ENCODE measurements at regions of chr10 and their contacts with region 1.

Region 1: GRCh38 chr10:103592186-103593021 is 98.9 kb downstream of the NEURL1 start:
- DNase-seq: peak; percentile 56 to 94
- ATAC-seq: peak; percentile 80 to 94
- H3K4me3 ChIP-seq: no peak overlapping the region
- H3K27ac ChIP-seq: no peak overlapping the region
- H3K4me1 ChIP-seq: no peaks in the 10 kb centered on the region
- CTCF ChIP-seq: peak; percentile 77
- EP300 ChIP-seq: no peak
- POLR2A ChIP-seq: no peak
- RAD21 ChIP-seq: peak; percentile 76 to 86

Region 2: DNA sequence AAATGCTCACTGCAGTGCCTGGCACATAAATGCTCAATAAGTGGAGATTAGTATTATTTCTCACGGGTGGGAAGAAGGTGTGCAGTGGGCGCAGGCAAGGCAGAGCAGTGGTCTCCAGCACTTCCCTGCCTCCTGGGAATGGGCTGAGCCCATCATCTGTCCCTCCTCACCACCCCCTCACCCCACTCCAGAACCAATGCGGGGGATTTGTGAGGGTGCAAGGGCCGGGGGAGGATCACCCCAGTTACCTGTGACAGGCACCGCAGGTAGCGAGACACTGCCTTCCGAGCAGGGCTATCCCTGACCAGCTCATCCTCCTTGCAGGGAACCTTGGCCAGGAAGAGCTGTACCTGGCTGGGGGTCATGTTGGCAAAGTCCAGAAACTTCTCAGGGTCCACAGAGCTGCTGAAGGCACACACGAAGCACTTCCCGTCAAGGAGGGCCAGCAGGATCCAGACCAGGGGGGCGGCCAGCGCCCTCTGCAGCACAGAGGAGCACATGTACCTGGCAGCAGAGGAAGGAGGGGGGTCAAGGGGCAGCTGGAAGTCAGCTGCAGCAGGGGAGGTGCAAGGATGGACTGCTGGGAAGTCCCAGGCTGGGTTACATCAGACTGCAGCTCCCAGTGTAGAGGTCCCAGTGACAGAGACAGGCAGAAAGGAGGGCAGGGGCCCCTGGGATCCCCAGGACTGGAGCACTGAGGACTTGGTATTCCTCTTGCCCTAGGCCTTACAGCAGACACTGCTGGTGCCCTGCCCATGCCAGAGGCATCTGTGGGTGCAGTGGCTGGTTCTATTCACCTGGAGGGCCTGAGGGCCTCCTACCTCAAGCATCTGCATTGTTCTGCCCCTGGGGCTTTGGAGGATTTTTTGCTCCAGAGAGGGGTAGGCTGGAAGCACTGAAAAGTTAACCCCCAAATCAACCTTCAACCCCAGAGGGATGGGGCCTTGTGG is 116.1 kb before region 1 on chr10:
- CTCF ChIA-PET with region 1: no interaction called
- POLR2A ChIA-PET with region 1: no interaction called
- DNase-seq: peak in 1 of 2 experiments; percentile 39
- ATAC-seq: peak; percentile 58 to 77
- H3K4me3 ChIP-seq: no peak overlapping the region
- H3K27ac ChIP-seq: no peak overlapping the region
- H3K4me1 ChIP-seq: peaks cover 26% of the 10 kb centered on the region
- CTCF ChIP-seq: no peak
- EP300 ChIP-seq: no peak
- POLR2A ChIP-seq: no peak
- RAD21 ChIP-seq: no peak

Region 3: DNA sequence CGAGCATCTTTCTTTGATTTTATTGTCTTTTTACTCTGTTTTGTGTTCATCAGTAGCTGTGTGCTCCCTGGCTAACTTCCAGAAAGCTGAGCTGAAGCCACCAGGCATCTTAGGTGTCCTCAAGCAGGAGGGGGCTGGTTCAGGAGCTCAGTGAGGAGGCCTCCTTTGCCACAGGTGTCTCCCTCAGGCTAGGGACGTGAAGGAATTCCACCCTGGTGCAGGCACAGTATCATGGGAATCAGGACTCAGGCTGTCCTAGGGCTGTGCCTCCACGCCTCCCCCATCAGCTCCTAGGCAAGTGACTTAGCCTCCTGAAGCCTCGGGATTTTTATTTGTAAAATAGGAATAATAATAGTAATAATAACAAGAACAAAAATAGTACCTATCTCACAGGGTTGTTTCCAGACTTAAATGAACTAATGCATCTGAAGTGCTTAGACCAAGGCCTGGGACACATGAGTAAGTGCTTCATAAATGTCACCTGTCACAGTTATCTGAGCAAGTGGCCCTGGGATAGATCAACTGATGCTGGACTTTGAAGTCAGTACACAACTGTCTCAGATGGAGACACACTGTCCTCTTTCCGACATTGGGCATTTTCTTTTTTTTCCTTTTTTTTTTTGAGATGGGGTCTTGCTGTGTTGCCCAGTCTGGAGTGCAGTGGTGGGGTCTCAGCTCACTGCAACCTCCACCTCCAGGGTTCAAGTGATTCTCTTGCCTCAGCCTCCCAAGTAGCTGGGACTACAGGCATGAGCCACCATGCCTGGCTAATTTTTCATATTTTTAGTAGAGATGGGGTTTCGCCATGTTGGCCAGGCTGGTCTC is 105.9 kb before region 1 on chr10:
- CTCF ChIA-PET with region 1: interaction called, 10 read pairs
- POLR2A ChIA-PET with region 1: interaction called, 3 read pairs
- DNase-seq: no peak
- ATAC-seq: no peak
- H3K4me3 ChIP-seq: no peak overlapping the region
- H3K27ac ChIP-seq: no peak overlapping the region
- H3K4me1 ChIP-seq: no peaks in the 10 kb centered on the region
- CTCF ChIP-seq: no peak
- EP300 ChIP-seq: no peak
- POLR2A ChIP-seq: no peak
- RAD21 ChIP-seq: no peak

Region 4: DNA sequence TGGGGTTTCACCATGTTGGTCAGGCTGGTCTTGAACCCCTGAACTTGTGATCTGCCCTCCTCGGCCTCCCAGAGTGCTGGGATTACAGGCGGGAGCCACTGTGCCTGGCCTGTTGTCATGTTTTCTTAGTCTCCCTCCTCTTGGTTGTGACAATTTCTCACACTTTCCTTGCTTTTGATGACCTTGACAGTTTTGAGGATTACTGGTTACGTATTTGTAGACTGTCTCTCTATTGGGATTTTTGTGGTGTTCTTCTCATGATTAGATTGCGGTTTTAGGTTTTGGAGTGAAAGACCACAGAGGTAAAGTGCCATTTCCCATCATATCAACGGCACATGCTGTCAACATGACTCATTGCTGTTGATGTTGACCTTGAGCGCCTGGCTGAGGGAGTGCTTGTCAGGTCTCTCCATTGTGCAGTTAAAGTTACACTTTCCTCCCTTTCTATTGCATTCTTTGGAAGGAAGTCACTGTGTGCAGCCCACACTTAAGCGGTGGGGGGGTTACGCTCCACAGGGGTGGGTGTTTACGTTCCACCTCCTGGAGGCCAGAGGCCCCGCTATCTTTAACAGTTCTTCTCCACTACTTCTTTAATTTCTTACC is 88.1 kb before region 1 on chr10:
- CTCF ChIA-PET with region 1: interaction called, 11 read pairs
- POLR2A ChIA-PET with region 1: no interaction called
- DNase-seq: peak; percentile 77 to 85
- ATAC-seq: peak; percentile 71 to 81; a peak in 5 of 6 replicates
- H3K4me3 ChIP-seq: no peak overlapping the region
- H3K27ac ChIP-seq: peak overlapping the region; percentile 45 to 60; a peak in 3 of 6 replicates
- H3K4me1 ChIP-seq: peaks cover 12% of the 10 kb centered on the region
- CTCF ChIP-seq: no peak
- EP300 ChIP-seq: no peak
- POLR2A ChIP-seq: no peak
- RAD21 ChIP-seq: no peak

Region 5: DNA sequence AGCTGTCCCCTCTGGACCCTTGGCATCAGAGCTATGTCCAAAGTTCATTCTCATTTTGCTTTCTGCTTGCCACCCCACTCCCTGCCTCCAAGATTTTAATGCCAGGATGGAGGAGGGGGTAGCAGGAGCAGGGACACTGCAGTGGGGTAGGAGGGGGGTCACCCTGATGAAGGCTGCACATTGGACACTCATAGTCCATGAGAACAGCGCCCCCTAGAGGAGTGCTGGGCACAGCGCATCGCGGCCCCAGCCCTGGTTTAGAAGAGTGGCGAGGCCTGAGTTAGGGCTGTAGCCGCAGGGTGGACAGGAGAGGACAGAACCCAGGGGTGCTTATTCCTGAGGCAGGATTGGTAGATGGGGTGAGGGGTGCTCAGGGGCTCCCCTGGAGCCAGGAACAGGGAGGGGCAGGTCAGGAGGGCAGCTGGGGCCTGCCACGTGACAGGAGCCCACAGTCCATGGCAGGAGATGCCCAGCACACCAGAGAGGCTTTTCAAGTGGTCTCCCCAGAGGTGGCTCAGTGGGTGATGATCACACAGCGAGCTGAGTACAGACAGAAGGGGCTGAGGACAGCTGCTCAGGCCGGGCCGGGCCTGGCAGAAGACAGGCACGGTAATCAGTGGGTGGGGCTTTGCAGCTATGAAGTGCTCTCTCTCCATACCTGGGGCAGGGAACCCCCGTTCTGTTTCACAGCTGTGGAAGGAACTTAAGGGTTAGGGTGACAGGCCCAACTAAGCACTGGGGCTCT is 27.5 kb before region 1 on chr10:
- CTCF ChIA-PET with region 1: interaction called, 28 read pairs
- POLR2A ChIA-PET with region 1: no interaction called
- DNase-seq: peak; percentile 43 to 67
- ATAC-seq: peak; percentile 62 to 88; a peak in 5 of 6 replicates
- H3K4me3 ChIP-seq: no peak overlapping the region
- H3K27ac ChIP-seq: no peak overlapping the region
- H3K4me1 ChIP-seq: no peaks in the 10 kb centered on the region
- CTCF ChIP-seq: peak; percentile 56
- EP300 ChIP-seq: no peak
- POLR2A ChIP-seq: no peak
- RAD21 ChIP-seq: peak; percentile 32 to 64; a peak in 2 of 5 replicates

Region 6: DNA sequence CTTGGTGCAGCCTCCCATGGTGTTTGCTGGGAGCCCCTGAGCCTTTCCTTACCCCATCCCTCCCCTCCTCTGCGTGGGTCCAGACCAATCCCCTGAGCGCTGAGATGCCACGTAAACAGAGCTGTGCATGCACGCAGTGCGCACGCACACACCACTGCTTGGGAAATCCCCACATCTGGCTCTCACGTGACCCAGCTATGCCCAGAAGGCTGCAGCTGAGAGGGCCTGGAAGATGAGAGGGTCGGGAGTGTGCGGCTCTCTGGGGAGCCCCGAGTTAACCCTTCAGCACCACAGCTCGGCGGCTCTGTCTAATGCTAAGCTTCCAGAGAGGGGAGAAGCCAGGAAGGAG is 85.7 kb after region 1 on chr10:
- CTCF ChIA-PET with region 1: interaction called, 265 read pairs
- POLR2A ChIA-PET with region 1: no interaction called
- DNase-seq: no peak
- ATAC-seq: no peak
- H3K4me3 ChIP-seq: no peak overlapping the region
- H3K27ac ChIP-seq: no peak overlapping the region; a peak in 1 of 6 replicates
- H3K4me1 ChIP-seq: peaks cover 21% of the 10 kb centered on the region
- CTCF ChIP-seq: no peak
- EP300 ChIP-seq: no peak
- POLR2A ChIP-seq: no peak
- RAD21 ChIP-seq: no peak

Region 7: DNA sequence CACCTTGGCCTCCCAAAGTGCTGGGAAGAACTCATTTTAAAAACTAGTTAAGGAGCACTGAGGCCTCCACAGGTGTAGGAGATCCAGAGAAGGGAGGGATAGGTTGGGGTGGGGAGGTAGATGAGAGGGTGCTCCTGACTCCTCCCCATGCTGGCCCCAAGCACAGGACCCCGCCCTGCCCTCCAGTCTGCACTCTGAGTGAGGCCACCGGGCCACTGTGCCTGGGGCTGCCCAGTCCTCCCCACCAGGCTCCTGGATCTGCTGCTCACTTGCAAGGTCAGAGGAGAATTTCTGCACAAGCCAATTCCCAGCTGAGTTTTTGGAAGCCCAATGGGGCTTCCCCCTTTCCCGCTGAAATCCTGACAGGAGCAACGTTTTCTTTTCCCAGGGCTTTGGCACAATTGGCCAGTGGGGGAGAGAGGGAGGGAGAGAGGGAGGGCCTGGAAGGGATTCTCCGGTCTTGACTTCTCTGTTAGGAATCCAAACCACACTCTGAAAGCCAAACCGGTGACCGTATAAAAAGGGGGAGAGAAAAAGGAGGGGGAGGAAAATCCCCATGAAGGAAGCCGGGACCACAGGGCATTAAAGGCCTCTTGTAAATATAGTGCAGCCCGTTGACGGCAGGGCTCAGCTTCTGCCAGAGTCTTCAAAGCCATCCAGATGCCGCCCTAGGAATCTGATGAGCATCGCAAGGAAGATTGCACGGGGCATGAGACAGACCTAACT is 146.8 kb after region 1 on chr10:
- CTCF ChIA-PET with region 1: no interaction called
- POLR2A ChIA-PET with region 1: no interaction called
- DNase-seq: no peak
- ATAC-seq: no peak
- H3K4me3 ChIP-seq: no peak overlapping the region
- H3K27ac ChIP-seq: peak overlapping the region in 1 of 2 experiments; percentile 27; a peak in 1 of 6 replicates
- H3K4me1 ChIP-seq: peaks cover 5% of the 10 kb centered on the region; the same call in 2 of the 3 replicates
- CTCF ChIP-seq: no peak
- EP300 ChIP-seq: no peak
- POLR2A ChIP-seq: no peak
- RAD21 ChIP-seq: no peak

Region 8: DNA sequence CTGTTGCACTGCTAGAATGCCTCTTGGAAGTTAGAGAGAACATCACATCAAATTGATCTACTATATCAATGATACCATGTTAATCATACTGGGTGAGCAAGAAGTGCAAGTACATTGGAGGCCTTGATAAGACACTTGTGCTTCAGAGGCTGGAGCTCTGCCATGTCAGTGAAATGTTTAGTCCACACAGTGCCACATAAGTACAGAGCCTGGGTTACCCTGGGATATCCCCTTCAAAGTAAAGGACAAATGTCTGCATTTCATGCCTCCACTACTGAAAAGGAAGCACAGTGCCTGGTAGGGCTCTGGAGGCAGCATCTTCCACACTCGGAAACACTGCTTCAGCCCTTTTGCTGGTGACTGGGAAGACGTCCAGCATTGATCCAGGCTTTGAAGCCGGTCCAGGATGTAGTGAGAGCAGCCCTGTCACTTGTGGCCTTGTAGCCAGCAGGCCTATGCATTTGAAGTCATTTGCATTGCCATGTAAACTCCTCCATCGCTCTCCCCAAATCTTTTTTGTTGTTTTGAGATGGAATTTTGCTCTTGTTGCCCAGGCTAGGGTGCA is 341.2 kb after region 1 on chr10:
- CTCF ChIA-PET with region 1: no interaction called
- POLR2A ChIA-PET with region 1: no interaction called
- DNase-seq: no peak
- ATAC-seq: no peak
- H3K4me3 ChIP-seq: no peak overlapping the region
- H3K27ac ChIP-seq: no peak overlapping the region
- H3K4me1 ChIP-seq: no peaks in the 10 kb centered on the region
- CTCF ChIP-seq: no peak
- EP300 ChIP-seq: no peak
- POLR2A ChIP-seq: no peak
- RAD21 ChIP-seq: no peak